ENCODE measurements at regions of chr12 and their contacts with region 1.

Region 1: GRCh38 chr12:48995061-48995879 is 3.9 kb downstream of the DDN start:
- DNase-seq: peak in 2 of 3 donors; percentile 64 to 74
- H3K4me3 ChIP-seq: peak overlapping the region in 1 of 3 experiments; percentile 35
- H3K4me3 Mint-ChIP-seq: peak overlapping the region; percentile 56 to 88
- H3K27ac ChIP-seq: no peak overlapping the region
- H3K27ac Mint-ChIP-seq: peak overlapping the region in 3 of 7 donors; percentile 20 to 67 (median 58)
- H3K4me1 ChIP-seq: peaks cover 38 to 46% of the 10 kb centered on the region in 2 donors
- H3K4me1 Mint-ChIP-seq: peaks cover 41% of the 10 kb centered on the region
- H3K27me3 ChIP-seq: peaks cover 56 to 83% of the 10 kb centered on the region in 2 donors
- H3K27me3 Mint-ChIP-seq: peaks cover 77 to 93% (median 84%) of the 10 kb centered on the region in 3 donors
- CTCF ChIP-seq: peak; percentile 90

Region 2: DNA sequence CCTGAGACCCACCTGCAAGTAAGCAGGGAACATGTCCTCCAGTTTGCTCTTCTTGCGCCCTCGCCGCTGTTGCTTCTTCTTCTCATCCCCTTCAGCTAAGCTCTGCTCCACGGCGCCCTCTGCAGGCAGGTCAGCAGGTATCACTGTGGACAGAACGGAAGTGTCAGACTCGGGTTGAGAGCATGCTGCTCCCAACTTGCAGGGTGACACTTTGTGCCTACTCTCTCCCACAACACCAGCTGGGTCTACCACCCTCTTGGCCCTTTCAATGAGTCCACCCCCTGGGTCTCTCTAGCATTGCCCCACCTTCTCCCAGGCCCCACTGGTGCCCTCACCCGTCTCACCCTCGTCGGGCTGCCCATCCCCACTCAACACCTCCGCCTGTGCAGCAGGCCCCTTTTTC is 48.6 kb after region 1 on chr12:
- intact Hi-C with region 1: loop called in 1 of 2 experiments (anchors 10 kb)
- DNase-seq: peak; percentile 48 to 61 (median 49)
- H3K4me3 ChIP-seq: no peak overlapping the region
- H3K4me3 Mint-ChIP-seq: no peak overlapping the region
- H3K27ac ChIP-seq: no peak overlapping the region
- H3K27ac Mint-ChIP-seq: peak overlapping the region in 3 of 7 donors; percentile 43 to 50 (median 43)
- H3K4me1 ChIP-seq: no peaks in the 10 kb centered on the region
- H3K4me1 Mint-ChIP-seq: no peaks in the 10 kb centered on the region
- H3K27me3 ChIP-seq: no peaks in the 10 kb centered on the region
- H3K27me3 Mint-ChIP-seq: no peaks in the 10 kb centered on the region
- CTCF ChIP-seq: peak; percentile 79